Activated CD8-positive, alpha-beta T cell treated with anti-CD3 and anti-CD28 coated beads, Interleukin-2, amount 10 ng/mL, durations not matched to agents 7 days and 5 days (primary cell): ENCODE measurements at regions of chr12 and their contacts with region 1.

Region 1: DNA sequence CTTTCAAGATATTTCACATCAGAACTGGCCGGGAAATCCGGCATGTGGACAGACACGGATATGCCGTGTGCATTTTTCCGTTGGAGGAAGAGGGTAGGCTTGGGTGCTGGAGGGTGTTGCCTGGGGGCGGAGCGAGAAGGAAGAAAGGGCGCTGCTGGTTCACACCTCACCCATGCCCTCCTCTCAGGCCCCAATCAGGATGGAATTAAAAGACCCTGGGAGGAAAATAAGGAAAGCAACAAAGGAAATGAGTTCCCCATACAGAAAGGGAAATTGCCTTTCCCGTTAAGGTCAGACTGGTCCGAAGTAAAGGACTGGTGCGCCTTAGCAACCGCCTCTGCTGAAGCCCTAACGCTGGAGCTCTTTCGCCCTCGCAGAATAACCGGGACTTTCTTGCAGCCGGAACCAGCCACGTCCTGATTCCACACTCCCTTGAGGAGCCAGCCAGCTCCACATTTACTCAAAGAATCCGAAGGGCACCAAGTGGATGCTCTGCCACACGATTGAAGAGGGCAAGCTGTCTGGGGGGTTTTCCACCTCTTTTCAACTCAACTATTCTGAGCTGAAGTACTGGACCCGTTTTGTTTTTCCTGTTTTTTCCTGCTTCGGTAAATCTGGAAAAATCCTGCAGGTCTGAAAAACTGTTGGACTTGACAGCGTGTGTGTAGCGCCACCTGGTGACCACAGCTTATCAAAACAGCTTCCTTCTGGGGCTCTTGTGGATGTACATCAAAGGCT is 37.7 kb upstream of the BCL2L14 start:
- DNase-seq: peak; percentile 75
- ATAC-seq: peak; percentile 91
- H3K4me3 Mint-ChIP-seq: peak overlapping the region; percentile 72
- H3K27ac Mint-ChIP-seq: peak overlapping the region; percentile 71
- H3K4me1 Mint-ChIP-seq: peaks cover 21% of the 10 kb centered on the region
- H3K27me3 Mint-ChIP-seq: peaks cover 3% of the 10 kb centered on the region

Region 2: DNA sequence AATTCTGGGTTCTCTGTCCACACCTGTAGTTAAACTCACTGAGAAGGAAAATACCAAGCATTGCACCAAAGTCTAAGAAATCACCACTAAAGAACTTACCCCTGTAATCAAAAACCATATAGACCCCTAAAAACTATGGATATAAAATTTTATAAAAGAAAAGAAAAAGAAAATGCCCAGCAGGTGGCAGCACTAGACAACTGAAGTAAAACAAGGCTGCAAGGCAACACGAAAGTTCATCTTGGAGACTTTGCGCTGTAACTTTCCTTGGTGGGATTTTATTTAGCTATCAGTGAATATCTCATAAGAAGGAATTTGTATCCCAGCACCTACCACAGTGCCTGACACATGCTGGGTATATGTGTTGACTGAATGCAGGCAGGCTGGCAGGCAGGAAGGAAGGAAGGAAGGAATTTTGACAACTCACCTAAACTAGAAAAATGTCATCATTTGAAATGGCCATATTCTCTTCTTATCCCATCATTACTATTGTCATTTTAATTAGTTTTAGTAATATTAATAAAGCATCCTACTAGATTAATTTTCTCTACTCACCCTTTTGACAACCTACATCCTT is 451.8 kb before region 1 on chr12:
- CTCF ChIA-PET with region 1: interaction called, 142 read pairs
- POLR2A ChIA-PET with region 1: interaction called, 3 read pairs
- DNase-seq: peak; percentile 81
- ATAC-seq: no peak
- H3K4me3 Mint-ChIP-seq: no peak overlapping the region
- H3K27ac Mint-ChIP-seq: no peak overlapping the region
- H3K4me1 Mint-ChIP-seq: peaks cover 2% of the 10 kb centered on the region
- H3K27me3 Mint-ChIP-seq: peaks cover 27% of the 10 kb centered on the region

Region 3: DNA sequence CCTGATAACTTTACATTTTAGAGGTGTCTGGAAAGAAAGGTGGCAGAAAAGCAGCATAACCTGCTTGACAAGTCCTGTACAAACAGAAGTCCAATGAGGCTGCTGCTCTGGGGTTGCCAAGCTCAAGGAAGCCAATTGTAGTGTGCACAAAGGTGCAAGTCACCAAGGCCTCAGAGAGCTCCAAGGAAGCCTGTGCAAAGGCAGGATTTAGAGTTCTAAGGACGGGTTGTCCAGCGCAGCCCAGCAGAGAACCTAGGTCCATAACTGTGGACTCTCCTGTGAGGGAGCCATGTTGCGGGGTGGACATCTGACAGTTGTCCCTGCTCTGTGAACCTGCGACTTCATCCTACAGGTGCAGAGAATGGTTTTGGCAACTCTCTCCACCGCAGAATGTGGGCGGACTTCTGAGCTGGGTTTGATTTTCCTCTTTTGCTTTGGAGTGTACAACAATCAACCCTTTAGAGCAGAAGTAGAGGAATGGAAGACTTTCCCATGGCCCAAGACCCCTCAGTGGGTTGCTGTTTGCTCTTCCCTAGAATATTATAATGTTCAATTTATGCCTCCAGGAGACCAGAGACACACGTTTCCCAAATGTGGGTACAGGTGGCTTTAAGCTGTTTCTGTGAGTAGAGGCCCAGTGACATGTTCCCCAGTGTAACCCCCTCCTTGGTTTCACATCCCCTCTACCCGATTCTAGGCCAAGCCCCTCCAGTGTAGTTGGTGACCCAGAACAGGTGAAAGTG is 302.6 kb before region 1 on chr12:
- CTCF ChIA-PET with region 1: interaction called, 12 read pairs
- POLR2A ChIA-PET with region 1: no interaction called
- DNase-seq: no peak
- ATAC-seq: no peak
- H3K4me3 Mint-ChIP-seq: no peak overlapping the region
- H3K27ac Mint-ChIP-seq: peak overlapping the region; percentile 40
- H3K4me1 Mint-ChIP-seq: peaks cover 58% of the 10 kb centered on the region
- H3K27me3 Mint-ChIP-seq: no peaks in the 10 kb centered on the region

Region 4: GRCh38 chr12:11981121-11981733 is 51.8 kb before region 1 on chr12:
- CTCF ChIA-PET with region 1: interaction called, 19 read pairs
- POLR2A ChIA-PET with region 1: no interaction called
- DNase-seq: peak; percentile 80
- ATAC-seq: peak; percentile 94
- H3K4me3 Mint-ChIP-seq: peak overlapping the region; percentile 52
- H3K27ac Mint-ChIP-seq: peak overlapping the region; percentile 94
- H3K4me1 Mint-ChIP-seq: peaks cover 45% of the 10 kb centered on the region
- H3K27me3 Mint-ChIP-seq: no peaks in the 10 kb centered on the region

Region 5: DNA sequence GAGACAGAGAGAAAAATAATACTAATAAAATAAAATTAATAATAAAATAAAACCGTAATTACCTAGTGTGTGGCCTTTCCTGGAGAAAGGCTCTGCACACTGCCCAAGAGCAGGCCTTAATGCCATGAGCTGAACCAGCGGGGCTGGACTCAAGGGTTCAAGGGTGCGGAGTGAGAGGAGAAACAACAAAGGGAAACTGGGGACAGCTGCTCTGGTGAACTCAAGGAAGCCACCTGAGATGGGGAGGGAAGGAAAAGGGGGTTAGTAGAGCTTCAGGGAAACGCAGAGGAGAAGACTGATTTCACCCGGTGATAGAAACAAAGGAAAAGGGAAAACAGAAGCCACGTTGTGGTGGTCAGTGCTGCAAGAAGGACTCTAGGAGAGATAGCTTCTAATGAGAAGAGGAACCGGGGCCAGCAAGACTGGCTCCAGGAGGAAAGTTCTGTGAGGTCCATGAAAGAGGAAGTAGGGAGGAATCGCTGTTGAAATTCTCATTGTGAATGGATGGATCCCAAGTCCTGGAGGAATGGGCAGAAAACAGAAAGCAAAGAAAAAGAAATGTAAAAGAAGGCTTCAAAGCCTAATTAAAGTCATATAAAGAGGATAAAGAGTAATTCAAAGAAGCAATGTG is 10.6 kb before region 1 on chr12:
- CTCF ChIA-PET with region 1: interaction called, 15 read pairs
- POLR2A ChIA-PET with region 1: interaction called, 3 read pairs
- DNase-seq: no peak
- ATAC-seq: no peak
- H3K4me3 Mint-ChIP-seq: no peak overlapping the region
- H3K27ac Mint-ChIP-seq: no peak overlapping the region
- H3K4me1 Mint-ChIP-seq: peaks cover 7% of the 10 kb centered on the region
- H3K27me3 Mint-ChIP-seq: peaks cover 8% of the 10 kb centered on the region

Region 6: GRCh38 chr12:12327802-12328201 is 294.8 kb after region 1 on chr12:
- CTCF ChIA-PET with region 1: interaction called, 15 read pairs
- POLR2A ChIA-PET with region 1: no interaction called
- DNase-seq: peak; percentile 46
- ATAC-seq: peak; percentile 55
- H3K4me3 Mint-ChIP-seq: no peak overlapping the region
- H3K27ac Mint-ChIP-seq: no peak overlapping the region
- H3K4me1 Mint-ChIP-seq: peaks cover 7% of the 10 kb centered on the region
- H3K27me3 Mint-ChIP-seq: peaks cover 17% of the 10 kb centered on the region